GM12878 (cell line): ENCODE measurements at regions of chr12 and their contacts with region 1.

Region 1: GRCh38 chr12:40192704-40193255 is 32.0 kb upstream of the LRRK2 start:
- DNase-seq: peak; percentile 86
- ATAC-seq: peak; percentile 99
- H3K4me3 ChIP-seq: peak overlapping the region; percentile 11; the same call in 1 of the 2 replicates
- H3K27ac ChIP-seq: peak overlapping the region; percentile 79
- H3K4me1 ChIP-seq: peaks cover 7% of the 10 kb centered on the region; the same call in 1 of the 2 replicates
- H3K27me3 ChIP-seq: no peaks in the 10 kb centered on the region
- CTCF ChIP-seq: no peak
- EP300 ChIP-seq: peak; percentile 13 to 61; a peak in 2 of 4 replicates
- POLR2A ChIP-seq: no peak
- RAD21 ChIP-seq: no peak

Region 2: GRCh38 chr12:40152783-40153383 is 39.9 kb before region 1 on chr12:
- CTCF ChIA-PET with region 1: interaction called, 7 read pairs
- POLR2A ChIA-PET with region 1: no interaction called
- RAD21 ChIA-PET with region 1: interaction called, 19 read pairs
- SMC1A ChIA-PET with region 1: interaction called, 16 read pairs
- in situ Hi-C with region 1: no loop called
- intact Hi-C with region 1: no loop called
- DNase-seq: no peak
- ATAC-seq: peak; percentile 78
- H3K4me3 ChIP-seq: no peak overlapping the region
- H3K27ac ChIP-seq: no peak overlapping the region
- H3K4me1 ChIP-seq: no peaks in the 10 kb centered on the region
- H3K27me3 ChIP-seq: no peaks in the 10 kb centered on the region
- CTCF ChIP-seq: peak; percentile 50 to 69 (median 66); a peak in 5 of 6 replicates
- EP300 ChIP-seq: no peak
- POLR2A ChIP-seq: no peak
- RAD21 ChIP-seq: peak; percentile 84

Region 3: DNA sequence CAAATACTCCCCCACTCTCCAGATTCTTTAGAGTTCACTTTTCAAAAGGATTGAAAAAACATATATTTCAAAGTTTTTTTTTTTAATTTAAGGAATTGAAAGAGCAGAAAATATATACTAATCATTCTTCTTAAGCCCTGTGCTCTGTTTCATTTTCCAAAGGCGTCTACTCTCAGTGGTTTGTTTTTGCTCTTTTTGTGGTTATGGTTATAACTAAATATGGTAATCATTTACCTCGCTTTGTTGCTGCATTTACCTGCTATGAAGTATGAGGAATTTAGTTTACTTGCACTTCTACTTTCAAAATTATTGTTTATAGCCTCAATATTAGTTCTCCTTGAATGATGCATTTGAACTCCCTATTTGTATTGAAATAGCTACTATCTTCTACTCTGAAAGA is 23.9 kb before region 1 on chr12:
- CTCF ChIA-PET with region 1: interaction called, 4 read pairs
- POLR2A ChIA-PET with region 1: interaction called, 5 read pairs
- RAD21 ChIA-PET with region 1: interaction called, 11 read pairs
- SMC1A ChIA-PET with region 1: interaction called, 31 read pairs
- in situ Hi-C with region 1: no loop called
- intact Hi-C with region 1: loop called (anchors 1 kb)
- DNase-seq: peak; percentile 55
- ATAC-seq: peak; percentile 94
- H3K4me3 ChIP-seq: 0 out of 2 replicates have a peak overlapping the region, but pooled peaks have one; percentile 9
- H3K27ac ChIP-seq: peak overlapping the region; percentile 56; the same call in 1 of the 2 replicates
- H3K4me1 ChIP-seq: peaks cover 10% of the 10 kb centered on the region
- H3K27me3 ChIP-seq: peaks cover 0 to 2% of the 10 kb centered on the region in 2 experiments; a peak in 1 of 4 replicates
- CTCF ChIP-seq: no peak
- EP300 ChIP-seq: peak; percentile 66 to 91
- POLR2A ChIP-seq: no peak
- RAD21 ChIP-seq: no peak

Region 4: DNA sequence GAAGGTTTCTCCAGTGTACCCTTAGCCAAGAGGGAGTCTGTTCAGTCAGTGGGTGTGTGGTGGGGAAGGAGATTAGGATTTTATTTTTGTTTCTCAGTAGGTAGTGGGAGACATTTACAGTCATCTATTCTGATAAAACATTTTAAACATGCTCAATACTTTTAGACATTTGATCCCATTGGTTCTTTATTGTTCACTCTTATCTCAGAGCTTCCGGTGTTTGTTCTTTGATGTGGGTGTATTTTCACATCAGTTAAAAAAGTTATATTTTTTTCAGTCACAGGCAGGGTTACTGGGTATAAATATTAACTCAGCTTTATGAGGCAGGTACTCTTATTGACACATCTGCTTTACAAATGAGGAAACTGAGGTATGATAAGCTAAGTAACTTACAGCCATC is 11.3 kb before region 1 on chr12:
- CTCF ChIA-PET with region 1: interaction called, 13 read pairs
- POLR2A ChIA-PET with region 1: interaction called, 14 read pairs
- RAD21 ChIA-PET with region 1: interaction called, 3 read pairs
- SMC1A ChIA-PET with region 1: interaction called, 19 read pairs
- in situ Hi-C with region 1: no loop called
- intact Hi-C with region 1: no loop called
- DNase-seq: no peak
- ATAC-seq: no peak
- H3K4me3 ChIP-seq: no peak overlapping the region
- H3K27ac ChIP-seq: no peak overlapping the region
- H3K4me1 ChIP-seq: no peaks in the 10 kb centered on the region
- H3K27me3 ChIP-seq: no peaks in the 10 kb centered on the region; a peak in 1 of 4 replicates
- CTCF ChIP-seq: no peak
- EP300 ChIP-seq: no peak
- POLR2A ChIP-seq: no peak
- RAD21 ChIP-seq: no peak

Region 5: DNA sequence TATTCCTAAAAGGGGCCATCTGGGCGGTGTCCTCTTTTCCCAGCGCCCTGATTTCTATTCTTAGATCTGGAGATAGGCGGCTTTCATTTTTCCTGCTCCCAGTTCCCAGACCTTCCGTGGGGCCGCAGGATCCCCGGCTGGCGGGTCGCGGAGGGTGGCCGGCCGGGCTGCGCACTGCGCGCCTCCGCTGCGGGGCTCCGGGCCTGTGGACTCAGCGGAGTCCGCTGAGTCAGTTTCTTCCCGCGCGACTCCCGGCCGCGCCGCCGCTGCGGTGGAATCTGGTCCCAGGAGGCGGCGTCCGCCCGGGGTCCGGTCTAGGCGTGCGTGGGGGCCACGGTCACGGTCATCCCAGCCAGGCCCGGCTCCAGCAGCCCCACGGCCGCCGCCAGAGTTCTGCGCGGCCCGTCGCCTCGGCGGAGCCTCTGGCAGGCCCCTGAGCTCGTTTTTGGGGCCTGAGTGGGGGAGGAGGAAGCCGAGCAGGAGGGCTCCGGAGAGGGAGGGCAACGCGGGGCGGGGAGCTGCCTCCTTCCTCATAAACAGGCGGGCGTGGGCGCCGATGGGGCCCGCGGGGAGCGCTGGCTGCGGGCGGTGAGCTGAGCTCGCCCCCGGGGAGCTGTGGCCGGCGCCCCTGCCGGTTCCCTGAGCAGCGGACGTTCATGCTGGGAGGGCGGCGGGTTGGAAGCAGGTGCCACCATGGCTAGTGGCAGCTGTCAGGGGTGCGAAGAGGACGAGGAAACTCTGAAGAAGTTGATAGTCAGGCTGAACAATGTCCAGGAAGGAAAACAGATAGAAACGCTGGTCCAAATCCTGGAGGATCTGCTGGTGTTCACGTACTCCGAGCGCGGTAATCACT is 31.9 kb after region 1 on chr12 and contains the start of gene LRRK2:
- CTCF ChIA-PET with region 1: interaction called, 6 read pairs
- POLR2A ChIA-PET with region 1: interaction called, 23 read pairs
- RAD21 ChIA-PET with region 1: interaction called, 29 read pairs
- SMC1A ChIA-PET with region 1: interaction called, 37 read pairs
- in situ Hi-C with region 1: no loop called
- intact Hi-C with region 1: loop called (anchors 1 kb)
- DNase-seq: no peak
- ATAC-seq: peak; percentile 69
- H3K4me3 ChIP-seq: peak within 1 kb of the TSS; percentile 59
- H3K27ac ChIP-seq: peak within 1 kb of the TSS; percentile 46
- H3K4me1 ChIP-seq: peaks cover 9% of the 10 kb centered on the region
- H3K27me3 ChIP-seq: peaks cover 0 to 17% of the 10 kb centered on the region in 2 experiments; a peak in 1 of 4 replicates
- CTCF ChIP-seq: no peak
- EP300 ChIP-seq: peak; percentile 61 to 70; a peak in 2 of 4 replicates
- POLR2A ChIP-seq: peak; percentile 61
- RAD21 ChIP-seq: no peak
- polyA plus RNA-seq, gene LRRK2: 0.97 to 1.1 TPM

Region 6: DNA sequence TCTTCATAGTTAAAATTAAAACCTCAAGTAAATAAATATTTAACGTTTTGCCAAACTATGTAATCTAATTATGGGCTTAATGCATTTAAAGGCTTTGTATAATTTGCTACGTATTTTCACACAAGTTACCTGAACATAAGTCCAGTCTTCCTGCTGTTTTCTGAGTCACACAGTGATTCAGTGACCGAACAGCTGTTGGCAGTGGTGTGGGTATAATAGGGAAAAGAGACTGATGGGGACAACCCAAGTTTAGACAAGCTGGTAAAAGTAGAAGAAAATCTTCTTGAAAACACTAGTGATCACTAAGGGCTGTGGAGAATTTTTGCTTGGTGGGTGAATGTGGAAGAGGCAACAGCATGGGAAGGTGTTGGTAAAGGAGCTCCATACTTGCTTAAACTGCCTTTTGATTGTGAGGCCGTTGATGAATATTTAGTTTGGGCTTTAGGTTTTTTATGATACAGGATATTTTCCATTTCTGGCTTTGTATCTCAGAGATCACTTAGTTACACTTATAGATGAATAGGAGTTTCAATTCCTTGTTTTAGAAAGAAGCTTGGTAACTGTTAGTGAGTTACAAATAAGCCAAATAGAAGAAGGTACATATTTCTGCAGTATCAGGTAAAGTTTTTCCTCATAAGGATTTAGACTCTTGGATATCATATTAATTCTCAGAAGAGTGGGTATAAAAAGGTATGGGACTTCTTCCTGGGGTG is 56.0 kb after region 1 on chr12:
- CTCF ChIA-PET with region 1: no interaction called
- POLR2A ChIA-PET with region 1: no interaction called
- RAD21 ChIA-PET with region 1: no interaction called
- SMC1A ChIA-PET with region 1: interaction called, 11 read pairs
- in situ Hi-C with region 1: no loop called
- intact Hi-C with region 1: no loop called
- DNase-seq: no peak
- ATAC-seq: peak; percentile 87
- H3K4me3 ChIP-seq: no peak overlapping the region
- H3K27ac ChIP-seq: no peak overlapping the region
- H3K4me1 ChIP-seq: peaks cover 6% of the 10 kb centered on the region; the same call in 1 of the 2 replicates
- H3K27me3 ChIP-seq: no peaks in the 10 kb centered on the region
- CTCF ChIP-seq: no peak
- EP300 ChIP-seq: no peak
- POLR2A ChIP-seq: no peak
- RAD21 ChIP-seq: no peak

Region 7: GRCh38 chr12:40375076-40375475 is 182.3 kb after region 1 on chr12:
- CTCF ChIA-PET with region 1: no interaction called
- POLR2A ChIA-PET with region 1: no interaction called
- RAD21 ChIA-PET with region 1: no interaction called
- SMC1A ChIA-PET with region 1: no interaction called
- in situ Hi-C with region 1: no loop called
- intact Hi-C with region 1: no loop called
- DNase-seq: no peak
- ATAC-seq: peak; percentile 91
- H3K4me3 ChIP-seq: no peak overlapping the region
- H3K27ac ChIP-seq: no peak overlapping the region
- H3K4me1 ChIP-seq: no peaks in the 10 kb centered on the region
- H3K27me3 ChIP-seq: no peaks in the 10 kb centered on the region
- CTCF ChIP-seq: peak; percentile 30 to 46 (median 45); a peak in 5 of 6 replicates
- EP300 ChIP-seq: no peak
- POLR2A ChIP-seq: no peak
- RAD21 ChIP-seq: no peak